Natural killer cell (primary cell): ENCODE measurements at regions of chr11 and their contacts with region 1.

Region 1: GRCh38 chr11:67613960-67614715 is 7.4 kb downstream of the NDUFV1 start:
- DNase-seq: peak; percentile 88 to 95
- ATAC-seq: peak; percentile 86 to 94 (median 90)
- H3K4me3 ChIP-seq: peak overlapping the region; percentile 44
- H3K4me3 Mint-ChIP-seq: peak overlapping the region; percentile 82
- H3K27ac ChIP-seq: peak overlapping the region; percentile 100
- H3K27ac Mint-ChIP-seq: peak overlapping the region; percentile 96 to 99
- H3K4me1 ChIP-seq: peaks cover 49% of the 10 kb centered on the region
- H3K4me1 Mint-ChIP-seq: peaks cover 15 to 46% of the 10 kb centered on the region in 2 donors
- H3K27me3 ChIP-seq: no peaks in the 10 kb centered on the region
- H3K27me3 Mint-ChIP-seq: no peaks in the 10 kb centered on the region
- CTCF ChIP-seq: peak; percentile 54

Region 2: GRCh38 chr11:66823700-66824099 is 790.4 kb before region 1 on chr11:
- intact Hi-C with region 1: no loop called
- DNase-seq: no peak
- ATAC-seq: no peak
- H3K4me3 ChIP-seq: no peak overlapping the region
- H3K4me3 Mint-ChIP-seq: no peak overlapping the region
- H3K27ac ChIP-seq: no peak overlapping the region
- H3K27ac Mint-ChIP-seq: no peak overlapping the region
- H3K4me1 ChIP-seq: no peaks in the 10 kb centered on the region
- H3K4me1 Mint-ChIP-seq: no peaks in the 10 kb centered on the region
- H3K27me3 ChIP-seq: no peaks in the 10 kb centered on the region
- H3K27me3 Mint-ChIP-seq: no peaks in the 10 kb centered on the region
- CTCF ChIP-seq: no peak

Region 3: DNA sequence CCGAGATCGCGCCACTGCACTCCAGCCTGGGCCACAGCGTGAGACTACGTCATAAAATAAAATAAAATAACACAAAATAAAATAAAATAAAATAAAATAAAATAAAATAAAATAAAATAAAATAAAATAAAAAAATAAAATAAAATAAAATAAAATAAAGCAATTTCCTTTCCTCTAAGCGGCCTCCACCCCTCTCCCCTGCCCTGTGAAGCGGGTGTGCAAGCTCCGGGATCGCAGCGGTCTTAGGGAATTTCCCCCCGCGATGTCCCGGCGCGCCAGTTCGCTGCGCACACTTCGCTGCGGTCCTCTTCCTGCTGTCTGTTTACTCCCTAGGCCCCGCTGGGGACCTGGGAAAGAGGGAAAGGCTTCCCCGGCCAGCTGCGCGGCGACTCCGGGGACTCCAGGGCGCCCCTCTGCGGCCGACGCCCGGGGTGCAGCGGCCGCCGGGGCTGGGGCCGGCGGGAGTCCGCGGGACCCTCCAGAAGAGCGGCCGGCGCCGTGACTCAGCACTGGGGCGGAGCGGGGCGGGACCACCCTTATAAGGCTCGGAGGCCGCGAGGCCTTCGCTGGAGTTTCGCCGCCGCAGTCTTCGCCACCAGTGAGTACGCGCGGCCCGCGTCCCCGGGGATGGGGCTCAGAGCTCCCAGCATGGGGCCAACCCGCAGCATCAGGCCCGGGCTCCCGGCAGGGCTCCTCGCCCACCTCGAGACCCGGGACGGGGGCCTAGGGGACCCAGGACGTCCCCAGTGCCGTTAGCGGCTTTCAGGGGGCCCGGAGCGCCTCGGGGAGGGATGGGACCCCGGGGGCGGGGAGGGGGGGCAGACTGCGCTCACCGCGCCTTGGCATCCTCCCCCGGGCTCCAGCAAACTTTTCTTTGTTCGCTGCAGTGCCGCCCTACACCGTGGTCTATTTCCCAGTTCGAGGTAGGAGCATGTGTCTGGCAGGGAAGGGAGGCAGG is 30.6 kb before region 1 on chr11 and contains the start of gene GSTP1:
- intact Hi-C with region 1: loop called (anchors 2 kb)
- DNase-seq: peak; percentile 86 to 87
- ATAC-seq: peak; percentile 87 to 93 (median 88)
- H3K4me3 ChIP-seq: peak within 1 kb of the TSS; percentile 66
- H3K4me3 Mint-ChIP-seq: peak within 1 kb of the TSS; percentile 87
- H3K27ac ChIP-seq: peak within 1 kb of the TSS; percentile 80
- H3K27ac Mint-ChIP-seq: peak within 1 kb of the TSS; percentile 84 to 88
- H3K4me1 ChIP-seq: peaks cover 59% of the 10 kb centered on the region
- H3K4me1 Mint-ChIP-seq: peaks cover 51 to 74% of the 10 kb centered on the region in 2 donors
- H3K27me3 ChIP-seq: no peaks in the 10 kb centered on the region
- H3K27me3 Mint-ChIP-seq: no peaks in the 10 kb centered on the region
- CTCF ChIP-seq: peak; percentile 61
- total RNA-seq, gene GSTP1: 172 to 218 (median 212) TPM

Region 4: DNA sequence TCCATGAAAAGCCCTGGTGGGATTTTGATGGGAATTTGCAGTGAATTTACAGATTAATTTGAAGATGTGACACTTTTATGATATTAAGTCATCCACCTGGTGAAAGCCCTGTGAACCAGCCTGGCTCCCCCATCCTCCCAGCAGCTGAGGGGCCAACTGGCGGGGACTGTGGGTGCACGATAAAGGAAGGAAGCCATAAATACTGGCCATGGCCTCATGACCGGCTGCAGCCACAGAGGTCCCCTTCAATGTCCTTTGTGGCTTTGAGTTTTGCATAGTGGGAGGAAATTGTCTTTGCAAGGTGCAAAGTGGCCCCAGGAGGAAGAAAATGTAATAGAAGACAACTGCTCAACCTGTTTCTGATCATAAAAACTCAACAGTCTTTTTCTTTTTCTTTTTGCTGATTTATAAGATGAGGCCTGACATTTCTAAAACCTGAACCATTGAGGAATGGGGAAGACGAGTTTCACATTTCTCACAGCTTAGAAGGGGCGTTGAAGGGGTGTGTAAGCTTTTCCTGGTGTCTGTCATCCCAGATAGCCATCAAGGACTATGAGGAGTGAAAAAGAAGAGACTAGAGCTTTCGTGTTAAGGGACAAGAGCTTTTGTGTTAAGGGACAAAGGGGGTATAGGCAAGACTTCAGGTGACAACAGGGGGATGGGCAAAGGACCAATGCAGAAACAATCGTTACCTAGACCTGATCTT is 13.7 kb before region 1 on chr11:
- intact Hi-C with region 1: no loop called
- DNase-seq: no peak
- ATAC-seq: peak; percentile 21 to 60 (median 53)
- H3K4me3 ChIP-seq: no peak overlapping the region
- H3K4me3 Mint-ChIP-seq: peak overlapping the region; percentile 85
- H3K27ac ChIP-seq: peak overlapping the region; percentile 42
- H3K27ac Mint-ChIP-seq: peak overlapping the region; percentile 81 to 85
- H3K4me1 ChIP-seq: peaks cover 24% of the 10 kb centered on the region
- H3K4me1 Mint-ChIP-seq: peaks cover 28% of the 10 kb centered on the region in 2 donors
- H3K27me3 ChIP-seq: no peaks in the 10 kb centered on the region
- H3K27me3 Mint-ChIP-seq: no peaks in the 10 kb centered on the region
- CTCF ChIP-seq: no peak

Region 5: GRCh38 chr11:67630228-67630942 is 16.2 kb after region 1 on chr11:
- intact Hi-C with region 1: loop called (anchors 2 kb)
- DNase-seq: peak; percentile 93 to 96
- ATAC-seq: peak; percentile 78 to 90 (median 82)
- H3K4me3 ChIP-seq: peak overlapping the region; percentile 59
- H3K4me3 Mint-ChIP-seq: peak overlapping the region; percentile 86
- H3K27ac ChIP-seq: peak overlapping the region; percentile 81
- H3K27ac Mint-ChIP-seq: peak overlapping the region; percentile 71 to 95
- H3K4me1 ChIP-seq: peaks cover 23% of the 10 kb centered on the region
- H3K4me1 Mint-ChIP-seq: peaks cover 5 to 22% of the 10 kb centered on the region in 2 donors
- H3K27me3 ChIP-seq: no peaks in the 10 kb centered on the region
- H3K27me3 Mint-ChIP-seq: no peaks in the 10 kb centered on the region
- CTCF ChIP-seq: peak; percentile 76